T-cell (primary cell): ENCODE measurements at regions of chr5 and their contacts with region 1.

Region 1: GRCh38 chr5:123771715-123772114 is 259.7 kb downstream of the CSNK1G3 start:
- DNase-seq: no peak
- ATAC-seq: no peak
- H3K4me3 ChIP-seq: no peak overlapping the region
- H3K4me3 Mint-ChIP-seq: no peak overlapping the region
- H3K27ac ChIP-seq: no peak overlapping the region
- H3K27ac Mint-ChIP-seq: no peak overlapping the region
- H3K4me1 ChIP-seq: no peaks in the 10 kb centered on the region
- H3K4me1 Mint-ChIP-seq: no peaks in the 10 kb centered on the region
- H3K27me3 ChIP-seq: no peaks in the 10 kb centered on the region
- H3K27me3 Mint-ChIP-seq: no peaks in the 10 kb centered on the region

Region 2: GRCh38 chr5:124492444-124493224 is 720.9 kb after region 1 on chr5:
- CTCF ChIA-PET with region 1: no interaction called
- POLR2A ChIA-PET with region 1: interaction called in 1 of 2 experiments, 12 read pairs
- DNase-seq: no peak
- ATAC-seq: no peak
- H3K4me3 ChIP-seq: no peak overlapping the region
- H3K4me3 Mint-ChIP-seq: no peak overlapping the region
- H3K27ac ChIP-seq: no peak overlapping the region
- H3K27ac Mint-ChIP-seq: no peak overlapping the region
- H3K4me1 ChIP-seq: no peaks in the 10 kb centered on the region
- H3K4me1 Mint-ChIP-seq: no peaks in the 10 kb centered on the region
- H3K27me3 ChIP-seq: no peaks in the 10 kb centered on the region
- H3K27me3 Mint-ChIP-seq: peaks cover 0 to 6% of the 10 kb centered on the region in 2 donors